ENCODE measurements at regions of chr12 and their contacts with region 1.

Region 1: GRCh38 chr12:53451661-53452158 is at the start of gene PCBP2:
- DNase-seq: peak; percentile 88 to 98 (median 97)
- ATAC-seq: peak; percentile 94
- H3K4me3 ChIP-seq: peak within 1 kb of the TSS; percentile 69
- H3K4me3 Mint-ChIP-seq: peak within 1 kb of the TSS; percentile 51 to 99 (median 98)
- H3K27ac ChIP-seq: peak within 1 kb of the TSS; percentile 96
- H3K27ac Mint-ChIP-seq: peak within 1 kb of the TSS; percentile 85 to 100 (median 99)
- H3K4me1 ChIP-seq: peaks cover 20 to 26% of the 10 kb centered on the region in 2 donors
- H3K4me1 Mint-ChIP-seq: peaks cover 23 to 42% (median 37%) of the 10 kb centered on the region in 7 donors
- H3K27me3 ChIP-seq: no peaks in the 10 kb centered on the region
- H3K27me3 Mint-ChIP-seq: no peaks in the 10 kb centered on the region
- total RNA-seq, gene PCBP2: 737 to 1,110 (median 928) TPM

Region 2: GRCh38 chr12:53180220-53180930 is 271.3 kb before region 1 on chr12 and contains the starts of genes CSAD and ZNF740:
- CTCF ChIA-PET with region 1: no interaction called
- POLR2A ChIA-PET with region 1: interaction called, 3 read pairs
- intact Hi-C with region 1: loop called (anchors 1 to 5 kb)
- DNase-seq: peak; percentile 86 to 98 (median 97)
- ATAC-seq: peak; percentile 98
- H3K4me3 ChIP-seq: peak within 1 kb of the TSS; percentile 89
- H3K4me3 Mint-ChIP-seq: peak within 1 kb of the TSS; percentile 84 to 98 (median 92)
- H3K27ac ChIP-seq: peak within 1 kb of the TSS; percentile 92
- H3K27ac Mint-ChIP-seq: peak within 1 kb of the TSS; percentile 93 to 98 (median 97)
- H3K4me1 ChIP-seq: peaks cover 30 to 46% of the 10 kb centered on the region in 2 donors
- H3K4me1 Mint-ChIP-seq: peaks cover 44 to 57% (median 52%) of the 10 kb centered on the region in 7 donors
- H3K27me3 ChIP-seq: no peaks in the 10 kb centered on the region
- H3K27me3 Mint-ChIP-seq: no peaks in the 10 kb centered on the region
- total RNA-seq, gene CSAD: 34.1 to 76.3 (median 69.1) TPM
- total RNA-seq, gene ZNF740: 37.2 to 135 (median 49.5) TPM

Region 3: DNA sequence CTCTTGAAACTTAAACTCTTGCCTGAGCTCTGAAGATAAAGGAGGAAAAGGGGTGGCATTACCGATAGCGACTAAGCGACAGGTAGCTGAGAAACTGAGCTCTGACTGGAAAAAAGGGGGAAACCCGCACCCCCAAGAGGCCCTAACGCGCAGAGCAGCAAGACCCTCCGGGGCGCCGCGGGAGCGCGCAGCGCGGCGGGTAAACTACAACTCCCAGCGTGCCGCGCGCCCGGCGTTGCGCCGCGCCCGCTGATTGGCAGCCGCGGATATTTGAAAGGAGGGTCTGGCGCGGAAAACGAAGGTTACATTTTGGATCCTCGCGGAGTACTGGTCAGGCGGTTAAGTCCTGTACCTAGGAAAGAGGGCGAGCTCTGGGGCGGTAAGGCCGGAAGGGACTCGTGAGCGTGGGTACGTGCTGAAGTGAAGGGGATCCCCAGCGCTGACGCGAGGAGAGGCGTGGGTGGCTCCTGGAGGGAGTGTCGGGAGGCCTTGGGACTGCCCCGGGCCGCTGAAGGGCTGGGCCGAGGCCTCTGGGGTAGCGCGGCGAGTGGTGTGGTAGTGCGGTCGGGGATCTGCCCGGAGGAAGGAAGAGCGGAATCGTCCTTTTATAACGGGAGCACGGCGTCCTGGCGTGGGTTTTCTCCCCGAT is 183.6 kb before region 1 on chr12 and contains the start of gene ESPL1:
- CTCF ChIA-PET with region 1: no interaction called
- POLR2A ChIA-PET with region 1: no interaction called
- intact Hi-C with region 1: loop called in 1 of 2 experiments (anchors 1 kb)
- DNase-seq: peak; percentile 67 to 91 (median 81)
- ATAC-seq: peak; percentile 93
- H3K4me3 ChIP-seq: peak within 1 kb of the TSS; percentile 80
- H3K4me3 Mint-ChIP-seq: peak within 1 kb of the TSS; percentile 95 to 99 (median 96)
- H3K27ac ChIP-seq: peak within 1 kb of the TSS; percentile 83
- H3K27ac Mint-ChIP-seq: peak within 1 kb of the TSS; percentile 44 to 98 (median 88)
- H3K4me1 ChIP-seq: peaks cover 9 to 11% of the 10 kb centered on the region in 2 donors
- H3K4me1 Mint-ChIP-seq: peaks cover 10 to 54% (median 20%) of the 10 kb centered on the region in 7 donors
- H3K27me3 ChIP-seq: no peaks in the 10 kb centered on the region
- H3K27me3 Mint-ChIP-seq: no peaks in the 10 kb centered on the region
- total RNA-seq, gene ESPL1: 0.08 to 65.4 (median 1.1) TPM

Region 4: GRCh38 chr12:53492830-53493611 is 41.3 kb after region 1 on chr12:
- CTCF ChIA-PET with region 1: interaction called, 3 read pairs
- POLR2A ChIA-PET with region 1: no interaction called
- intact Hi-C with region 1: loop called (anchors 2 kb)
- DNase-seq: peak; percentile 72 to 90 (median 80)
- ATAC-seq: peak; percentile 98
- H3K4me3 ChIP-seq: peak overlapping the region; percentile 82
- H3K4me3 Mint-ChIP-seq: peak overlapping the region; percentile 89 to 98 (median 92)
- H3K27ac ChIP-seq: peak overlapping the region; percentile 87
- H3K27ac Mint-ChIP-seq: peak overlapping the region; percentile 88 to 98 (median 95)
- H3K4me1 ChIP-seq: peaks cover 12 to 16% of the 10 kb centered on the region in 2 donors
- H3K4me1 Mint-ChIP-seq: peaks cover 19 to 51% (median 40%) of the 10 kb centered on the region in 7 donors
- H3K27me3 ChIP-seq: no peaks in the 10 kb centered on the region
- H3K27me3 Mint-ChIP-seq: no peaks in the 10 kb centered on the region

Region 5: GRCh38 chr12:53508534-53509199 is 57.0 kb after region 1 on chr12:
- CTCF ChIA-PET with region 1: interaction called, 9 read pairs
- POLR2A ChIA-PET with region 1: interaction called, 8 read pairs
- intact Hi-C with region 1: loop called (anchors 1 to 2 kb)
- DNase-seq: peak; percentile 63 to 82 (median 73)
- ATAC-seq: peak; percentile 98
- H3K4me3 ChIP-seq: no peak overlapping the region
- H3K4me3 Mint-ChIP-seq: peak overlapping the region in 1 of 10 donors; percentile 39
- H3K27ac ChIP-seq: peak overlapping the region; percentile 39
- H3K27ac Mint-ChIP-seq: peak overlapping the region in 8 of 9 donors; percentile 13 to 80 (median 66)
- H3K4me1 ChIP-seq: peaks cover 6 to 7% of the 10 kb centered on the region in 2 donors
- H3K4me1 Mint-ChIP-seq: peaks cover 5 to 17% (median 9%) of the 10 kb centered on the region in 7 donors
- H3K27me3 ChIP-seq: no peaks in the 10 kb centered on the region
- H3K27me3 Mint-ChIP-seq: no peaks in the 10 kb centered on the region

Region 6: DNA sequence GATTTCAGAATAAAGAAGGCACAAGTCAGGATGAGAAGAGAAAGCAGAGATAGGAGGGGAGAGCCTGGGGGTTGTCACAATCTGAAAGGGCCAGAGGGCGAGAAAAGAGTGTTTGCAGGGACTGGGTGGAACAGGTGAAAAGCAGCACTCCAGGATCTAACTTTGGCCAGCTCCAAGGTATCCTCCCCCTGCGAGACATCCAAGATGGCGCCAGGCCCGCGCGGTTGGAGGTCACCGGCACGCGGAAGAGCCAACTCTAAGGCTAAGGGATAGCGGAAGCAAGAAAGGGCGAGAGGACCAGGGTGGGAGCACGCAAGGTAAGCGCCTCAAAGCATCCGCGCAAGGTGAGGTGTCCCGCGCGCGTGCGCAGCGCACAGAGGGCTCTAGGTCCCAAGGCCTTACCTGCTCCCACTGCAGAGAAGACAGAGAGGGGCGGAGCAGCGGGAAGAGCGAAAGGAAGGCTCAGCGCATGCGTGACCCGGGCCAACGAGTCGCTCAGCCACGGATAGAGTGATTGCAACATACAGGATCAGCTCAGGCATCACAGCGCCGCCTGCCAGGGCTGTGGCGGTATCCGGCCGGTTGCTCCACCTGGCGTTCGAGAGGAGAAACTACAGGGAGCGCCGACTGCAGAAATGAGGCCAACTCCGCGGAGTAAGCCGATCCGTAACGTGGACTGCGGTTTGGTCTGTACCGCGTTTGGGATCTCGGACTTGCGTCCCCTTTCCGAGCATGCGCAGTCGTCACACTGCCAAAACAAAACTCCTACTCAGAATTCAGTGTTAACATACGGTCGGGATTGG is 224.1 kb after region 1 on chr12 and contains the start of gene ATP5MC2:
- CTCF ChIA-PET with region 1: no interaction called
- POLR2A ChIA-PET with region 1: interaction called, 3 read pairs
- intact Hi-C with region 1: loop called in 1 of 2 experiments (anchors 2 kb)
- DNase-seq: peak; percentile 92 to 98 (median 97)
- ATAC-seq: peak; percentile 97
- H3K4me3 ChIP-seq: peak within 1 kb of the TSS; percentile 64
- H3K4me3 Mint-ChIP-seq: peak within 1 kb of the TSS; percentile 91 to 99 (median 94)
- H3K27ac ChIP-seq: peak within 1 kb of the TSS; percentile 76
- H3K27ac Mint-ChIP-seq: peak within 1 kb of the TSS; percentile 91 to 98 (median 95)
- H3K4me1 ChIP-seq: peaks cover 7 to 21% of the 10 kb centered on the region in 2 donors
- H3K4me1 Mint-ChIP-seq: peaks cover 21 to 38% (median 32%) of the 10 kb centered on the region in 7 donors
- H3K27me3 ChIP-seq: no peaks in the 10 kb centered on the region
- H3K27me3 Mint-ChIP-seq: peaks cover 16 to 35% (median 21%) of the 10 kb centered on the region in 5 donors
- total RNA-seq, gene ATP5MC2: 237 to 332 (median 275) TPM

Measured in naive thymus-derived CD4-positive, alpha-beta T cell (primary cell).